ENCODE measurements at regions of chr7 and their contacts with region 1.

Region 1: DNA sequence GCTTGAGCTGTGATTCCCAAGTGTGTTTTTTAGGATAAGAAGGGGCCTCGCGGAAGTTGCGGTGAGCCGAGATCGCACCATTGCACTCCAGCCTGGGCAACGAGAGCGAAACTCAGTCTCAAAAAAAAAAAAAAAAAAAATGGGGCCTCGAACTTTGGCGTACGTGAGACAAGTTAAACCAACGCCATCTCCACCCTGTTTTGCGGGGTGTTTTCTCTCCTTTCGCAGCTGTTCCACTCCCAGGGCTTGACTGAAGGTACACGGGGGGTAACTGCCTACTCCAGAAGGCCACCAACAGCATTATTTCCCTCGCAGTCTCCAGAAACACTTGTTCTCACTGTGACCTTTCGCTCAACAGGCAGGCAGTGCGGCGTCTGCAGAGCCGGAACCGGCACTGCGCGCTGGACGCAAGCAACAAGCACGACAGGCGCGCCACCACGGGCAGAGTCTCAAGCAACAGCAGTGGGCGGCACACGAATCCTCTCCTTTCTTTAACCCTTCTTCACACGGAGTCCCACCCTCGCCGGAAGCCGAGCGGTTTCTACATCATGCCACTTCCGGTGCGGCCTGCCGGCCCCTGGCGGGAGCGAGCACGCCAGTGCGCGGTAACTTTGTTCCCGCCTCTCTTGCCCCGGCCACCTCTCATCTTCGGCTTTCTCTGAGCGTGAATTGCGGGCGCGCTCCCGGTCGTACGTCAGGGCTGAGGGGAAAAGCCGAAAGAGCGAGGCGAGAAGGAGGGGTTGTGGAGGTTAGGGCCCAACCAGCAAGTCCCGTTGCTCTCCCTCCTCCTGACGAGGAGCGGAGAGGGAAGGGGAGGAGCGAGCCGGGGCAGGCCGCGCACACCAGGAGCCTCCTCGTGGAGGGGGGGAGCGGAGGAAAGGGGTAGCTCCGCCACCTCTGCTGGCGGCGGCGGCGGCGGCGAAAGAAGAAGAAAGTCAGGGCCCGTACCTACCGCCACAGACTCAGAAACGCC is 814 bp upstream of the CDK13 start:
- DNase-seq: peak; percentile 99
- H3K4me3 Mint-ChIP-seq: peak overlapping the region; percentile 97
- H3K27ac Mint-ChIP-seq: peak overlapping the region; percentile 99
- H3K4me1 Mint-ChIP-seq: peaks cover 22% of the 10 kb centered on the region
- H3K27me3 Mint-ChIP-seq: no peaks in the 10 kb centered on the region

Region 2: GRCh38 chr7:39428221-39428620 is 521.0 kb before region 1 on chr7:
- CTCF ChIA-PET with region 1: no interaction called
- intact Hi-C with region 1: no loop called
- DNase-seq: no peak
- H3K4me3 Mint-ChIP-seq: no peak overlapping the region
- H3K27ac Mint-ChIP-seq: no peak overlapping the region
- H3K4me1 Mint-ChIP-seq: no peaks in the 10 kb centered on the region
- H3K27me3 Mint-ChIP-seq: peaks cover under 1% of the 10 kb centered on the region

Region 3: GRCh38 chr7:39566023-39566921 is 383.0 kb before region 1 on chr7 and contains the start of gene YAE1:
- CTCF ChIA-PET with region 1: no interaction called
- intact Hi-C with region 1: loop called (anchors 1 kb)
- DNase-seq: peak; percentile 86
- H3K4me3 Mint-ChIP-seq: peak within 1 kb of the TSS; percentile 97
- H3K27ac Mint-ChIP-seq: peak within 1 kb of the TSS; percentile 95
- H3K4me1 Mint-ChIP-seq: peaks cover 18% of the 10 kb centered on the region
- H3K27me3 Mint-ChIP-seq: no peaks in the 10 kb centered on the region
- total RNA-seq, gene YAE1: 4.6 to 5.5 TPM

Region 4: DNA sequence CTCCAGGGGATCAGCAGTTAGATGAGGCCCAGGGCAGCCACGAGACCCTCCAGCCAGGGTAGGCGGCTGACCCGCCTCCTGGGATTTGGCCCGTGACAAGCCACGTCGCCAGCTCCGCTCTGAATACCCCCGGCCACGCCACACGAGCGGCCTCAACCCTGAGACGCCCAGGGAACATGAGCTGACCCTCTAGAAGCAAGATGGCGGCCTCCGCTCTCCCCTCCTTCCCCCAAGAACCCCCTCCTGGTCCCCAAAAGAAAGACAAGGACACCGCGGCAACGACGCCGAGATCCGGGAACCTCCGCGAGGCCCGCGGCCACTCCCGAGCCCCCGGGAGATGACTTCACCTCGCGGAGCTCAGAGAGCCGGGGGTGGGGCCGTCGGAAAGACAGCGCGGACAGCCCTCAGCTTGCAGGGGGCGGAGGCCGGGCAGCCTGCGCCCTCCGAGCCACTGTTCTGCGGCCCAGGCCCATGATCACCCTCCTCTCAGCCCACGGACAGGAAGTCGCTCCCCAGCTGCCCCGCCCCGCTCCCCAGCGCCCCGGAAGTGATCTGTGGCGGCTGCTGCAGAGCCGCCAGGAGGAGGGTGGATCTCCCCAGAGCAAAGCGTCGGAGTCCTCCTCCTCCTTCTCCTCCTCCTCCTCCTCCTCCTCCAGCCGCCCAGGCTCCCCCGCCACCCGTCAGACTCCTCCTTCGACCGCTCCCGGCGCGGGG is 326.1 kb before region 1 on chr7 and contains the start of gene RALA:
- CTCF ChIA-PET with region 1: no interaction called
- intact Hi-C with region 1: loop called (anchors 1 kb)
- DNase-seq: peak; percentile 92
- H3K4me3 Mint-ChIP-seq: peak within 1 kb of the TSS; percentile 97
- H3K27ac Mint-ChIP-seq: peak within 1 kb of the TSS; percentile 95
- H3K4me1 Mint-ChIP-seq: peaks cover 44% of the 10 kb centered on the region
- H3K27me3 Mint-ChIP-seq: no peaks in the 10 kb centered on the region
- total RNA-seq, gene RALA: 30.3 to 35.6 TPM

Region 5: GRCh38 chr7:39732837-39733804 is 216.1 kb before region 1 on chr7:
- CTCF ChIA-PET with region 1: no interaction called
- intact Hi-C with region 1: loop called (anchors 1 kb)
- DNase-seq: peak; percentile 98
- H3K4me3 Mint-ChIP-seq: peak overlapping the region; percentile 74
- H3K27ac Mint-ChIP-seq: peak overlapping the region; percentile 61
- H3K4me1 Mint-ChIP-seq: peaks cover 32% of the 10 kb centered on the region
- H3K27me3 Mint-ChIP-seq: peaks cover 3% of the 10 kb centered on the region

Region 6: DNA sequence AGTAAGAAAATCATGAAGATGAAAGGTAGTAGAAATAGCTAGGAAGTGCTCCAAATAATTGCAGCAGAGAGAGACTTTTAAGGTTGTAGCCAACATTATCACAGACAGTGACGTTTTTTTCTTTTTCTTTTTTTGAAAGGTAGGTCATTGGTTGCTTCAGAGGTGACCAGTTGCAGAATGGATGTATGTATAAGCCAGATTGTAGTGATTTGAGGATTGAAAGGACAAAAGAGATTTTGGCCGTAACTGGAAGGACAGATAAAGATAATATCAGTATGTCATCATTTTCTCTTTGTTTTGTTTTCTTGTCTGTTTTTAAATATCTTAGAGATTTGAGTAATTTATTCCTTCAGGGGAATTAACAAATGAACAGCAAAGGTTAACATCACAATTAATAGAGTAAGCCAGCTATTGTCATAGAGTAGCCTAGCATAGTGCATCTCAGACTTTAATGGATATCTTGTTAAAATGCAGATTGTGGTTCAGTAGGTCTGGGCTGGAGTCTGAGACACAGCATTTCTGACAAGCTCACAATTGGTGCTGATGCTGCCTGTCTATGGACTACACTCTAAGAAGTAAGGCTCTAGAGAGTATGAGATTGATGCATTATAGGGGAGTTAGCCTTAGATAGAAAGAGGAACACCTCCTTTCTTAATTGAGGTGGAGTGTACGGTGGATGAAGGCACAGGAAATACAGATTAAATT is 29.1 kb after region 1 on chr7:
- CTCF ChIA-PET with region 1: no interaction called
- intact Hi-C with region 1: loop called (anchors 1 kb)
- DNase-seq: no peak
- H3K4me3 Mint-ChIP-seq: no peak overlapping the region
- H3K27ac Mint-ChIP-seq: no peak overlapping the region
- H3K4me1 Mint-ChIP-seq: peaks cover 17% of the 10 kb centered on the region
- H3K27me3 Mint-ChIP-seq: no peaks in the 10 kb centered on the region

Region 7: DNA sequence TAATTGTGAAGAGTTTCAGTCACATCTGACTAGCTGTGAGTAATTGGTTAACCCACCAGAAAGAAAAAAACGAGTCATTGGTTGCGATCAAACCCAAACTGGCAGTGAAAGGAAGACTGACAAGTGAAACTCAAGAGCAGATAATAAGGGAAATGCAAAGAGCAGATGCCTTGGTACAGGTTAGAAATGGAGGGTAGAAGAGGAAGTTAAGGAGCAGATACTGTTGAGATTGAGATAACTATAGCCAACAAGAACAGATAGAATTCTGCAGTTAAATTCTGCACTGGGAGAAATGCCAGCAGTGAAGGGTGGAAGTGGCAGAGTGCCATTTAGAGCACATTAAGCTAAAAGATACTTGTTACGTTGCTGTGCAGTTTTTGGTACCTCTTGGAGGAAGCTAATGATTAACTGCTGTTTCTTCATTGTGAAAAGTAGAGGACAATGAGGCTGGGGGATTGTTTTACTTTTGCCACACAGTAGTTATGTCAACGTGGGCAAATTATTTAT is 66.6 kb after region 1 on chr7:
- CTCF ChIA-PET with region 1: interaction called, 4 read pairs
- intact Hi-C with region 1: loop called (anchors 2 kb)
- DNase-seq: peak; percentile 27
- H3K4me3 Mint-ChIP-seq: no peak overlapping the region
- H3K27ac Mint-ChIP-seq: peak overlapping the region; percentile 50
- H3K4me1 Mint-ChIP-seq: peaks cover 25% of the 10 kb centered on the region
- H3K27me3 Mint-ChIP-seq: no peaks in the 10 kb centered on the region

Region 8: DNA sequence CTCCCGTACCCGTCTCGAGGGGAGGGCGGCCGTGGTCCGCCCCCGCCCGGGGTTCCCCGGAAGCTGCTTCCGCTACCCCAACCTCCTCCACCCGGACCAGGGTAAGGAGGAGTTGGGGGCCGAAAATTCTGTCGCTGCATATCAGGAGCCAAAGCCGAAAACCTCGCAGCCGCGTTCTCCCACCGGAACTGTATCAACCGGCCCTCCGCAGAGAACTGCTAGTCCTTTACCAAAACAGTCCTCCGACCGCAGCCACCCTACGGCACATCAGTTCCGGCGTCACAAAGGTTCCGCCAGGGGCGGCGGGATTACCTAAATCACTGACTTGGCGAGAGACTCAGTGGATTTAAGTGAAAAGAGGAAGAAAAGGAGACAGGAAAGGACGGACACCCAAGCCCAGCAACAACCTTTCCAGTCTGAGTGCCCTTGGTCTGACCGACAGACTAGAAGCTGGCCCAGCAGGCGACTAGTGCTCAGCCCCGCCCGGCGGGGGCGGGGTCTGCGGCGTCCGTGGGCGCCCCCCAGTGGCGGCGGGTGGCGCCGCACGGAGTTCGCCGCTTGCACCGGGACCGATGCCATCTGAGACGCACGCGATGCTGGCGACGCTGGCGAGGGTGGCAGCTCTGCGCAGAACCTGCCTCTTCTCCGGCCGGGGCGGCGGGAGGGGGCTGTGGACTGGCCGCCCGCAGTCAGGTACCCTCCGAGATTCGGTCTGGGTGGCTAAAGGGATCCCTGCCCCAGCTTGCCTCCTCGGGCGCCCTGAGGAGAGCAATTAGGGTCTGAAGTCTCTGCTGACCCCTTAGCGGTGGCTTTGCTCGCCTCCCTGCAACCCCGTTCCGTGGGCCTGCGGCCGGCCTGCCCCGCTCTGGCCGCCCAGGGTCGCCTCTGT is 185.4 kb after region 1 on chr7 and contains the starts of genes MPLKIP and SUGCT:
- CTCF ChIA-PET with region 1: interaction called, 3 read pairs
- intact Hi-C with region 1: loop called (anchors 1 kb)
- DNase-seq: peak; percentile 87
- H3K4me3 Mint-ChIP-seq: peak within 1 kb of the TSS; percentile 93
- H3K27ac Mint-ChIP-seq: peak within 1 kb of the TSS; percentile 96
- H3K4me1 Mint-ChIP-seq: peaks cover 26% of the 10 kb centered on the region
- H3K27me3 Mint-ChIP-seq: no peaks in the 10 kb centered on the region
- total RNA-seq, gene MPLKIP: 38.1 to 38.8 TPM
- total RNA-seq, gene SUGCT: 0.81 to 1.2 TPM

Measured in activated naive CD4-positive, alpha-beta T cell treated with anti-CD3 and anti-CD28 coated beads for 36 hours (primary cell).